IMR-90 (cell line): ENCODE measurements at regions of chr5 and their contacts with region 1.

Region 1: GRCh38 chr5:73448463-73449136 is at the start of gene FOXD1:
- DNase-seq: peak; percentile 97
- ATAC-seq: peak; percentile 82
- H3K4me3 ChIP-seq: peak within 1 kb of the TSS; percentile 94
- H3K27ac ChIP-seq: peak within 1 kb of the TSS; percentile 97
- H3K4me1 ChIP-seq: peaks cover 7% of the 10 kb centered on the region; the same call in 1 of the 2 replicates
- H3K27me3 ChIP-seq: peaks cover 8% of the 10 kb centered on the region
- CTCF ChIP-seq: 0 out of 2 replicates have a peak, but pooled peaks have one; percentile 1
- POLR2A ChIP-seq: peak; percentile 94
- RAD21 ChIP-seq: peak; percentile 18; the same call in 1 of the 2 replicates
- total RNA-seq, gene FOXD1: 3.2 and 6.4 TPM in 2 replicates

Region 2: DNA sequence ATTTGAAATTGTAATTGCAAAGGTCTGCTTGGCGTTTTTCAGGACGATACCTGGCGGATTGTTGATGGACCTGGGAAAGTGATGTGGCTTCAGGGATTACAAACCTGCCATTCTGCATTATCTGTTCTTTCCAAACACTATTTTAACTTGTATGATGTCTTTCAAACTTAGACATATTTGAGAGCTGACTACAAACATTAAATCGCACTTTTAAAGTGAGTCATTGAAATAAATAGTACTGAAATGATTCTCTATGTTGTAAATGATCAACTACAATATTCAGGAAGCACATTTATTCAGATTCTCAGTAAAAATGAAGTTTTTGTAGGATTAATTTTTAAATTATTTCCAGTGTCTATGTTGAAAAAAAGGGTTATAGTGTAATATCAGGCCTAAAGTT is 360.6 kb before region 1 on chr5:
- CTCF ChIA-PET with region 1: interaction called, 3 read pairs
- POLR2A ChIA-PET with region 1: no interaction called
- dilution Hi-C with region 1: no loop called
- in situ Hi-C with region 1: loop called (anchors 10 kb)
- intact Hi-C with region 1: loop called (anchors 1 kb)
- DNase-seq: peak; percentile 46
- ATAC-seq: peak; percentile 49; the same call in 1 of the 2 replicates
- H3K4me3 ChIP-seq: no peak overlapping the region
- H3K27ac ChIP-seq: no peak overlapping the region
- H3K4me1 ChIP-seq: 0 out of 2 replicates have a peak, but pooled peaks cover 1% of the 10 kb centered on the region
- H3K27me3 ChIP-seq: no peaks in the 10 kb centered on the region
- CTCF ChIP-seq: no peak
- POLR2A ChIP-seq: no peak
- RAD21 ChIP-seq: no peak

Region 3: DNA sequence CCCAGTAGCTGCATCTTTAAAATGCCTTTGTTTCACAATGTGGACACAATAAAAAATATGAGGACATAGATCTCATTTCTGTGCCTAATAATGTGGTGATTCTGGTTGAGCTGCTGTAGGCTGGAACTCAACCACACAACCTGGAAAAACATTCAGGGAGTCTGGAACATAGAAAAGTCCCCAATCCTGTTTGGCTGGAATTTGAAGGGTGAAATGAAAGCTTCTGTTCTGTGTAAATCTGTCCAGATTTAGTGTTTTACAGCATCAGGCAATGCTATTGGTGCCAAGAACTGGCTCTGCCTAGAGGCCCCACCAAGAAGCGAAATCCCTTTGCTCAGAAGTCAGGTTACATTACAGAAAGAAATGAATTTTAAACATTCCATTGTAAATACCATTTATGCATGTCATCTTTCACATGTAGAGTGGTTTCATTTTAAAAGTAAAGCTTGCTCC is 219.4 kb before region 1 on chr5:
- CTCF ChIA-PET with region 1: interaction called, 14 read pairs
- POLR2A ChIA-PET with region 1: no interaction called
- dilution Hi-C with region 1: no loop called
- in situ Hi-C with region 1: loop called (anchors 10 kb)
- intact Hi-C with region 1: no loop called
- DNase-seq: peak; percentile 67
- ATAC-seq: peak; percentile 82
- H3K4me3 ChIP-seq: no peak overlapping the region
- H3K27ac ChIP-seq: no peak overlapping the region
- H3K4me1 ChIP-seq: peaks cover 13% of the 10 kb centered on the region
- H3K27me3 ChIP-seq: no peaks in the 10 kb centered on the region; the same call in 1 of the 2 replicates
- CTCF ChIP-seq: no peak
- POLR2A ChIP-seq: no peak
- RAD21 ChIP-seq: no peak

Region 4: GRCh38 chr5:73298772-73299630 is 149.6 kb before region 1 on chr5:
- CTCF ChIA-PET with region 1: no interaction called
- POLR2A ChIA-PET with region 1: no interaction called
- dilution Hi-C with region 1: no loop called
- in situ Hi-C with region 1: no loop called
- intact Hi-C with region 1: loop called (anchors 2 kb)
- DNase-seq: peak; percentile 85
- ATAC-seq: peak; percentile 84
- H3K4me3 ChIP-seq: peak overlapping the region; percentile 45
- H3K27ac ChIP-seq: peak overlapping the region; percentile 86
- H3K4me1 ChIP-seq: peaks cover 9% of the 10 kb centered on the region; the same call in 1 of the 2 replicates
- H3K27me3 ChIP-seq: peaks cover 6% of the 10 kb centered on the region; the same call in 1 of the 2 replicates
- CTCF ChIP-seq: peak; percentile 41
- POLR2A ChIP-seq: no peak
- RAD21 ChIP-seq: 0 out of 2 replicates have a peak, but pooled peaks have one; percentile 28

Region 5: GRCh38 chr5:73312146-73312871 is 136.3 kb before region 1 on chr5:
- CTCF ChIA-PET with region 1: interaction called, 10 read pairs
- POLR2A ChIA-PET with region 1: interaction called, 18 read pairs
- dilution Hi-C with region 1: no loop called
- in situ Hi-C with region 1: loop called (anchors 5 kb)
- intact Hi-C with region 1: loop called (anchors 1 kb)
- DNase-seq: peak; percentile 96
- ATAC-seq: peak; percentile 63
- H3K4me3 ChIP-seq: no peak overlapping the region
- H3K27ac ChIP-seq: peak overlapping the region; percentile 74
- H3K4me1 ChIP-seq: peaks cover 14% of the 10 kb centered on the region
- H3K27me3 ChIP-seq: no peaks in the 10 kb centered on the region; the same call in 1 of the 2 replicates
- CTCF ChIP-seq: peak; percentile 75
- POLR2A ChIP-seq: no peak; the same call in 1 of the 2 replicates
- RAD21 ChIP-seq: peak; percentile 78

Region 6: GRCh38 chr5:73365301-73365853 is 83.2 kb before region 1 on chr5:
- CTCF ChIA-PET with region 1: interaction called, 3 read pairs
- POLR2A ChIA-PET with region 1: no interaction called
- dilution Hi-C with region 1: no loop called
- in situ Hi-C with region 1: loop called (anchors 5 kb)
- intact Hi-C with region 1: loop called (anchors 2 kb)
- DNase-seq: peak; percentile 96
- ATAC-seq: peak; percentile 83
- H3K4me3 ChIP-seq: no peak overlapping the region
- H3K27ac ChIP-seq: no peak overlapping the region
- H3K4me1 ChIP-seq: peaks cover 21% of the 10 kb centered on the region
- H3K27me3 ChIP-seq: no peaks in the 10 kb centered on the region
- CTCF ChIP-seq: no peak
- POLR2A ChIP-seq: no peak
- RAD21 ChIP-seq: no peak; the same call in 1 of the 2 replicates

Region 7: DNA sequence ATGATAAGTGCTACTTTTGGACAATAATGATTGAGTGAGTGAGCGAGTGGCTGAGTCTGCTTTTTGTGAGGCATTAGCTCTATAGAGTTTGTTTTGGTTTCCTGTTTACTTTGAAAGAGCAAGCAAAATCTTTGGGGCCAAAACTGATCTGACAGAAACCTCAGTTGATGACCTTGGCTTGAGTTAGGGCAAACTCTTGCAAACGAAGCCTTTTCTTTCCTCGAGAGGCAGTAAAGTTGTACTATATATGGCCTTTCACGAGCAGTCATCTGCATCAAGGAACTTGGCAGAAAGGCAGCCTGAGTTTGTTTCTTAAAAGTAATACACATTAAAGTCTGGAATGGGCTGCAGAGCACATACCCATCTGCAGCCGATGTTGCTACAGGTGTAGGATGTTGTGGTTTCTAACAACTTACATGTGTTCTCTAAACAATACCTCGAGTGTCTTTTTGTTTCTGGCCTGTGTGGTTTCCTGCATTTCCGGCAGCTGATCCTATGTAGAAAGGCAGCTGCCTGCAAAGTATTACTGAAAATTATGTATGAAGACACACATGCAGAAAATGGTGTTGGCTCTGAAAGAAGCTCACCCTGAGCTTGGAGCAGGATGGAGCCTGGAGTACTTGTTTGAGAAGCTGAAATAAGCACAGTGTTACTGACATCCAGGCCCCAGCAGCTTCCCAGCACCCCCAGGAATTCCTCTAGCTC is 60.8 kb before region 1 on chr5:
- CTCF ChIA-PET with region 1: no interaction called
- POLR2A ChIA-PET with region 1: no interaction called
- dilution Hi-C with region 1: no loop called
- in situ Hi-C with region 1: no loop called
- intact Hi-C with region 1: no loop called
- DNase-seq: peak; percentile 48
- ATAC-seq: peak; percentile 55
- H3K4me3 ChIP-seq: no peak overlapping the region
- H3K27ac ChIP-seq: no peak overlapping the region
- H3K4me1 ChIP-seq: peaks cover 8% of the 10 kb centered on the region
- H3K27me3 ChIP-seq: no peaks in the 10 kb centered on the region
- CTCF ChIP-seq: no peak
- POLR2A ChIP-seq: no peak
- RAD21 ChIP-seq: no peak